ENCODE measurements at regions of chr2 and their contacts with region 1.

Region 1: GRCh38 chr2:196225213-196225612 is 53.8 kb upstream of the STK17B start:
- DNase-seq: no peak
- ATAC-seq: no peak
- H3K4me3 ChIP-seq: no peak overlapping the region
- H3K4me3 Mint-ChIP-seq: peak overlapping the region in 3 of 10 donors; percentile 17 to 37 (median 17)
- H3K27ac ChIP-seq: no peak overlapping the region
- H3K27ac Mint-ChIP-seq: peak overlapping the region in 7 of 9 donors; percentile 14 to 97 (median 50)
- H3K4me1 ChIP-seq: peaks cover 13 to 70% of the 10 kb centered on the region in 2 donors
- H3K4me1 Mint-ChIP-seq: peaks cover 48 to 88% (median 85%) of the 10 kb centered on the region in 7 donors
- H3K27me3 ChIP-seq: no peaks in the 10 kb centered on the region
- H3K27me3 Mint-ChIP-seq: no peaks in the 10 kb centered on the region

Region 2: GRCh38 chr2:196041786-196042185 is 183.4 kb before region 1 on chr2:
- CTCF ChIA-PET with region 1: no interaction called
- POLR2A ChIA-PET with region 1: no interaction called
- intact Hi-C with region 1: no loop called
- DNase-seq: no peak
- ATAC-seq: no peak
- H3K4me3 ChIP-seq: no peak overlapping the region
- H3K4me3 Mint-ChIP-seq: no peak overlapping the region
- H3K27ac ChIP-seq: no peak overlapping the region
- H3K27ac Mint-ChIP-seq: no peak overlapping the region
- H3K4me1 ChIP-seq: no peaks in the 10 kb centered on the region
- H3K4me1 Mint-ChIP-seq: peaks cover 0 to 13% (median 8%) of the 10 kb centered on the region in 7 donors
- H3K27me3 ChIP-seq: no peaks in the 10 kb centered on the region
- H3K27me3 Mint-ChIP-seq: peaks cover 11 to 22% (median 17%) of the 10 kb centered on the region in 5 donors

Region 3: DNA sequence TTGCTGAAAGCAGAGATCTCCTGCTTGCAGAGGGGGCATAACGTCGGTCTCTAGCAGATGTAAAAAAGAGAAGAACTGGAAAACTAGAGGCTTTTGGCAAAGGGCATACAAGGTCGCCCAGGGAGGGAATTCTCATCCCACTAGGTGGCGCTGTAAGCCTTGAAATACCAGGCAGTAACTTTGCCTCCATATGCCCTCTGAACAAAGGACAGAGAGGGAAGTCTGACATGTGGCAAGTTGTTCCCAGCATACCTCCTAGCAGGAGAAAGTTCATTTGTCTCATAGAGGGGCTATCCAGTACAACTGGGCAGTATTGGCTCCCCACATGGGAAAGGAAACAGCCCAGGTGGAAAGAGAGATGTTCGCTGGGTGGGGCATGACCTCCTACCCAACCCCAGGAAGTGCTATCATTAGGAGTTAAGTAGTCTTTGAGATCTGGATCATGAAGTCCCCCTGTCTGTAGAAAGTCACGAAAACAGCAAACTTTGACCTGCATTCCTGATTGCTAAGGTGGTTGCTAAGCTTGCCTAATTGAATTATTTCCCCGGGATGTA is 93.8 kb before region 1 on chr2:
- CTCF ChIA-PET with region 1: interaction called, 5 read pairs
- POLR2A ChIA-PET with region 1: interaction called, 5 read pairs
- intact Hi-C with region 1: loop called in 1 of 2 experiments (anchors 1 kb)
- DNase-seq: peak in 4 of 9 donors; percentile 30 to 57 (median 50)
- ATAC-seq: peak; percentile 58
- H3K4me3 ChIP-seq: no peak overlapping the region
- H3K4me3 Mint-ChIP-seq: peak overlapping the region in 3 of 10 donors; percentile 1 to 36 (median 32)
- H3K27ac ChIP-seq: no peak overlapping the region
- H3K27ac Mint-ChIP-seq: peak overlapping the region in 8 of 9 donors; percentile 63 to 91 (median 79)
- H3K4me1 ChIP-seq: no peaks in the 10 kb centered on the region
- H3K4me1 Mint-ChIP-seq: peaks cover 0 to 27% (median 16%) of the 10 kb centered on the region in 7 donors
- H3K27me3 ChIP-seq: no peaks in the 10 kb centered on the region
- H3K27me3 Mint-ChIP-seq: no peaks in the 10 kb centered on the region

Region 4: DNA sequence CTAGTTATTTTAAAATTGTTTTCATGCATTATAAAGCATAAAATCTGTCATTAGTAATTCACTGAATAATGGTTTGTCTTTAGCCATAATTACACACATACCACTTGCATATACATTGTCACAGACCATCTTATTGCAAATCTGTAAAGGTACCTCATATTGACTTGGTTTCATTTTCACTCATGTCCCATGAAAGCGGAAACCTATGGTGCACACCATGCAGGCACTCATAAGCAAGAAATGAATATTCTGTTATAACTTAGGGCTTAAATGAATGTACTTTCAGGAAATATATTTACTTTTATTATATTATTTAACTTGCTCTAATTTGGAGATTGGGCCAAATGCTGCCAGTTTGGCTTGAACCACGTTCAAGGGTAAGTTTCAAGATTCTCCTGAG is 24.7 kb before region 1 on chr2:
- CTCF ChIA-PET with region 1: interaction called, 5 read pairs
- POLR2A ChIA-PET with region 1: interaction called, 17 read pairs
- intact Hi-C with region 1: no loop called
- DNase-seq: peak in 3 of 9 donors; percentile 34 to 49 (median 43)
- ATAC-seq: peak; percentile 78
- H3K4me3 ChIP-seq: peak overlapping the region; percentile 45
- H3K4me3 Mint-ChIP-seq: peak overlapping the region; percentile 41 to 83 (median 75)
- H3K27ac ChIP-seq: peak overlapping the region; percentile 65
- H3K27ac Mint-ChIP-seq: peak overlapping the region; percentile 54 to 94 (median 87)
- H3K4me1 ChIP-seq: peaks cover 28 to 34% of the 10 kb centered on the region in 2 donors
- H3K4me1 Mint-ChIP-seq: peaks cover 20 to 71% (median 53%) of the 10 kb centered on the region in 7 donors
- H3K27me3 ChIP-seq: no peaks in the 10 kb centered on the region
- H3K27me3 Mint-ChIP-seq: no peaks in the 10 kb centered on the region

Region 5: GRCh38 chr2:196239622-196240587 is 14.7 kb after region 1 on chr2:
- CTCF ChIA-PET with region 1: interaction called, 10 read pairs
- POLR2A ChIA-PET with region 1: interaction called, 49 read pairs
- intact Hi-C with region 1: loop called (anchors 1 kb)
- DNase-seq: peak; percentile 33 to 90 (median 83)
- ATAC-seq: peak; percentile 87
- H3K4me3 ChIP-seq: peak overlapping the region; percentile 36
- H3K4me3 Mint-ChIP-seq: peak overlapping the region; percentile 64 to 87 (median 76)
- H3K27ac ChIP-seq: peak overlapping the region; percentile 71
- H3K27ac Mint-ChIP-seq: peak overlapping the region; percentile 90 to 99 (median 97)
- H3K4me1 ChIP-seq: peaks cover 57 to 60% of the 10 kb centered on the region in 2 donors
- H3K4me1 Mint-ChIP-seq: peaks cover 55 to 90% (median 80%) of the 10 kb centered on the region in 7 donors
- H3K27me3 ChIP-seq: no peaks in the 10 kb centered on the region
- H3K27me3 Mint-ChIP-seq: no peaks in the 10 kb centered on the region

Region 6: GRCh38 chr2:196277002-196277401 is 51.8 kb after region 1 on chr2:
- CTCF ChIA-PET with region 1: interaction called, 71 read pairs
- POLR2A ChIA-PET with region 1: interaction called, 40 read pairs
- intact Hi-C with region 1: loop called in 1 of 2 experiments (anchors 1 kb)
- DNase-seq: peak in 7 of 9 donors; percentile 45 to 74 (median 63)
- ATAC-seq: peak; percentile 79
- H3K4me3 ChIP-seq: no peak overlapping the region
- H3K4me3 Mint-ChIP-seq: peak overlapping the region in 6 of 10 donors; percentile 30 to 83 (median 65)
- H3K27ac ChIP-seq: peak overlapping the region; percentile 63
- H3K27ac Mint-ChIP-seq: peak overlapping the region; percentile 50 to 99 (median 89)
- H3K4me1 ChIP-seq: peaks cover 21 to 42% of the 10 kb centered on the region in 2 donors
- H3K4me1 Mint-ChIP-seq: peaks cover 29 to 60% (median 47%) of the 10 kb centered on the region in 7 donors
- H3K27me3 ChIP-seq: no peaks in the 10 kb centered on the region
- H3K27me3 Mint-ChIP-seq: no peaks in the 10 kb centered on the region